GM18951 (cell line): ENCODE measurements at regions of chr20 and their contacts with region 1.

Region 1: GRCh38 chr20:11544029-11544678 is 373.5 kb upstream of the BTBD3 start:
- POLR2A ChIP-seq: no peak

Region 2: GRCh38 chr20:10553326-10553984 is 990.7 kb before region 1 on chr20:
- in situ Hi-C with region 1: loop called (anchors 10 kb)
- POLR2A ChIP-seq: no peak

Region 3: DNA sequence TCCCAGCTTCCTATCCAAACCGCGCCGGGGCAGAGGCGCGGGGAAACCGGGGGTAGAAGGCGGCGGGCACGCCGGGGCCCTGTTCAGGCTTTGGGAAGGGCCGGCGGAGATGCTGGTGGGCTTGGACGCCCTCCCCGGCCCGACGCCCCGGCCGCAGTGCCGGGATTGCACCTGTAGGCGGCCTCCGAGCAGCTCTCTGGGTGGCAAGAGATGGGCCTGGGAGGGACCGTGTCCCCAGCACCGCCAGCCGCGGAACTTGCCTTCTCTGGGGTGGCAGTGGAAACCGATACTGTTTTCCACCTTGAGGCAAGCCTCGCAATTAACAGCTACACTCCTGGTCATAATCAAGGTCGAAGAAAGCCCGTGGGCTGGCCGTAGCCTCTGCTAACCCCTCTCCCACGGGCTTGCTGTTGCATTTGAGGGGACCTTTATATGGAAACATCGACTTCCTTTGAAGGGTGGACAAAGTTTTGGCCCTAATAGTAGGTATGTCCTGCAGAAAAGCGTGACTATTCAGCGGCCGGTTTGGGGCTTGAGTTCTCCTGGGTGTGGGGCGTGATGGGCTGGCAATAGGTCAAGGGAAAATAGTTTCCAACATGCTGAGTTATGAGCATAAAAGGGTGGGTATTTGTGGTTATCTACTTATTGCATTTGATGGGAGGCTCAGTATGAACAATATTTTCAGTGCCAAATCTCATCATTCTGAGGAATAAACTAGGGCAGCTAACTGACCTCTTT is 869.3 kb before region 1 on chr20:
- in situ Hi-C with region 1: loop called (anchors 25 kb)
- POLR2A ChIP-seq: no peak

Region 4: DNA sequence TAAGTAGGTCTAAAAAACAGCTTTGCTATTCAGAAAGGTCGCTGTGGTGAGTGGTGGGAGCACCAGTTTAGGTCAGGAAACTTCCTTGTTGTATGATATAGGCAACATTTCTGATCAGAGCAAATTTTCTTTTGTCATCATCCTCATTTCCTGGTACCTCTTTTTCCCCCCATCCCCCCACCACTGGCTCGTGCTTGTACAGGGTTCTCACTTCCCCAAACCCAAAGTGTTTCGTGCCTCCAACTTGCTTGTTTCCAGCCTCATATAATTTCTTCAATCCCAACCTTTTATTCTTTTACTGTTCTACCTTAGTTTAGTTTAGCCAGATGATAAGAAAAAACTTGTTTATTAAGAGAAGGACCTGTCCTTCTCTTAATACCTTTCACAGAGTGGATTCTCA is 661.0 kb before region 1 on chr20:
- in situ Hi-C with region 1: no loop called
- POLR2A ChIP-seq: no peak

Region 5: DNA sequence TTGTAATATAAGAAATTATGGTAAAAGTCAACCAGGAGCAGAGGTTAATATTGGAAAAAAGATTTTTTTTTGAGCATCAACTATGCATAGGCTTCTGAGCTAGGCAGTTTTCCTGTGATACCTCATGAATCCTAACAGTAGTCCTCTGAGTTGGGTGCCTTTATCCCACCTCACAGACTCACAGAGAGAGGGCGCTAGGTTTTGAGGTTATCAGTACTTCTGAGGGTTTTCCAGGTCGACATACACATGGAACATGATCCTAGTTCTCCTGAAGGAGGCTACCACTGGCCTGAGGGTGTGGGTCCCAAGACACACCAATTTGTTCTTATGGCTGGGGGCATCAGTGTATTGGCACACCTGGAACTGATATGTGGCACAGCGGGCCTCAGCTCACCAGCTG is 511.5 kb before region 1 on chr20:
- in situ Hi-C with region 1: no loop called
- POLR2A ChIP-seq: no peak

Region 6: DNA sequence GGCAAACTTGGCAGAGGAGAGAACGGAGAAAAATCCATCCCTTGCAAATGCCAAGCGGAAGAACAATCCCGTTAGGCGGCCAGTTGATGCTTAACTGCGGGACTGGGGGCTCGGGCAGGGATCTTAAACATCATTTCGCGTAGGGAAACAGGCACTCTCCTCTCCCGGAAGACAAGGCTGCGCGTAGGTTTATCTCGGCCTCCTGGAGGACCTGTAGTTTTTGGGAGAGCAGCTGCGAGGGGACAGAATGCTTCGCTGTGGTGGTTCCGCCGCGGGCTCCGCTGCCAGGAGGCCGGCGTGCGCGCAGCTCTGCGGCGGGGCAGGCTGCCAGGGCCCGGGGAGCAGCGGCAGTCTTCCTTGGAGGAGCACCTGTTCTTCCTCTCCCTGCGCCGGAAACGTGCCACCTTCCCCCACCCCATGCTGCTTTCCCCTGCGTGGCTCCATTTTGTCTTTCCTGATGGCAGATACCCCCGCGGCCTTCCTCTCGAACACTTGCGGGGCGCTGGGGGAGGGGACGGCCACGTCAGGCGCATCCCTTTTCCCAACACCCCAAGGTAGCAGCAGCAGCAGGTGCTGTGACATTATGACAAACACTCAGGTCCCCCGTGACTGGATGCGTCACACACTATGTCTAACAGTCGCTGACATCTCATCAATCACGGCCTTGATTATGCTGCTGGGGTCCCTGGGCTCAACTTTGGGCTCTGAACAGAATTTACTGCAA is 142.8 kb after region 1 on chr20:
- in situ Hi-C with region 1: no loop called
- POLR2A ChIP-seq: no peak

Region 7: DNA sequence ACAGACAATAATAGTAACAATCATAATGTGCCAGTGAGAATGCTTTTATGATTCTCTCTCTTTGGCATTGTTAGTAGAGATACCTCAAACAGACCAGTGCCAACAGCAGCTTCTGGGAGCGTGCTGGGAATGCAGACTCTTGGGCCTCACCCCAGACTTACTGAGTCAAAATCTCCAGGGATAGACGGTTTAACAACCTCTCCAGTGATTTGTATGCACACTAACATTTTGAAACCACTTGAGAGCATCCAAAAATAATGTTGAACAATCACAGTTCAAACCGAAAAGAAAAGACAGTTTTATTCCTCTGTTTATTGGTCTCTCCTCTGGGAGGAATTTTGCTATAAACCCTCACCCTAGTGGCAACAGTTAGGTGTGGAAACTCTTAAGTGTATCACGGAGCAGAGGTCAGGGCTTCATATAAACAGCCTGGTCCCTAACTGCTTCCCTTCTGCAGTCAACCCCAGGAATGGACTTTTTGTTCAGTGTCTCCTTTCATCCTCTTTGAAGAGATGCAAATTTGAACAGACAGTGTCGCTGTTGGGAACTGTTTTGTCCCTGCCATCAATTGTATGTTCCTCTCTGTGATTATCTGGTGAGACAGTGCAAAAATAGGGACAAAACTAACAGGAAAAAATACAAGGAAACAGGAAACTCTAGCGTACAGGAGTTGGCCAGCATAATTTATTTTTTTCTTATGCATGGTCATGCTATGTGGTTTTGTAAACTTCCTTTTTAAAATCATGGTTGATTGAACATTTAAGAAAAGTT is 211.1 kb after region 1 on chr20:
- in situ Hi-C with region 1: no loop called
- POLR2A ChIP-seq: no peak